Ovary (tissue), 10 donors: ENCODE measurements at regions of chr3 and their contacts with region 1.

Region 1: DNA sequence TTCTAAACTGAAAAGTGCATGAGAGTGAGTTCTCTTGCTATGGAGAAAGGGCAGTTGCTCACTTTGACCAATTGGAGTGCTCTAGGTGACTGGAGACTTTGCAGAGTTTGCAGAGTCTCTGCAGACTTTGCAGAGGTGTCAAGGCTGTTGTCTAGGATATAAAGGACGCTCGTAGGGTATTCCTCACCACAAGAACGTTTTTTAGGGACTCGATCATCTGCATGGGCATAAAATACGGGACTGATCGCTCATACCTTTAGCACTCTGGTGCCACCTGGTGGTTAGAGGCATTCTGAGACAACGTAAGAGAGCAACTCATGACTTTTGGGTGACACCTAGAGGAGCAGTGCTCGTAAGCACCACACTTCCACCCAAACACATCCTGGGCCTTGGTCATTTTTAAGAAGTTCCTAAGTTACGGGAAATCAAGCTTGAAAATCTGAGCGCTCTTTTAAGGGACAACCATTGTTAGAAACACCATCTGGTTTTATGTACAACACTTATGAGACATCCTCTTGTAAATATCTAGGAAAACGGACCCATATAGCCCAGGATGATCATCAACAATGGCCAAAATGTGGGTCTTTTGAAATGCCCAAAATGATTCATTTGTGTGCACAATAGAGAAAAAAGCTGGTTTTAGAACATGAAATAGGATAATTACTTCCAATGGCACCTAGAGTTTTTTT is 51.6 kb upstream of the XCR1 start:
- DNase-seq: peak; percentile 86 to 96 (median 91)
- H3K4me3 ChIP-seq: no peak overlapping the region
- H3K27ac ChIP-seq: no peak overlapping the region
- H3K4me1 ChIP-seq: peaks cover 3% of the 10 kb centered on the region
- H3K27me3 ChIP-seq: no peaks in the 10 kb centered on the region
- CTCF ChIP-seq: peak; percentile 90 to 99 (median 99)
- EP300 ChIP-seq: no peak
- POLR2A ChIP-seq: no peak

Region 2: DNA sequence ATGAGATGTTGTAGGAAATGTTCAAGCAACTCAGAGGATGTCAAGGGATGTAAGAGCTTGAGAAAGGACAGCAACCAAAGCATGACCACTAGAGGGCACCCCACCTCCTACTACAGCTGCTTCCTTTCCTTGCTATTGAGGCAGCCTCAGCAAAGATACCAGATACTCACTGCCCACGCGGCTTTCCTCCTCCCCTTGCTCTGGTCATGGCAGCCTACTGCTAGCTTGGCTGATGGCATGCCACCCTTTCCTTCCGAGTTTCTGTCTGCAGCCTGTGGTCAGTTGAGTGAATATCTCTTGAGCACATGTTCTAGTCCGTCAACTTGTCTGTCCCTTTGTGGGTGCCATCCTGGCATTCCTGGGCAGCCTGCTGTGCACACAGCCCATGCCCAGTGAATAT is 140.0 kb before region 1 on chr3:
- intact Hi-C with region 1: loop called (anchors 2 to 5 kb)
- DNase-seq: peak; percentile 78 to 89 (median 83)
- H3K4me3 ChIP-seq: no peak overlapping the region
- H3K27ac ChIP-seq: no peak overlapping the region
- H3K4me1 ChIP-seq: peaks cover 4% of the 10 kb centered on the region
- H3K27me3 ChIP-seq: no peaks in the 10 kb centered on the region
- CTCF ChIP-seq: peak; percentile 60 to 88 (median 86)
- EP300 ChIP-seq: no peak
- POLR2A ChIP-seq: no peak

Region 3: DNA sequence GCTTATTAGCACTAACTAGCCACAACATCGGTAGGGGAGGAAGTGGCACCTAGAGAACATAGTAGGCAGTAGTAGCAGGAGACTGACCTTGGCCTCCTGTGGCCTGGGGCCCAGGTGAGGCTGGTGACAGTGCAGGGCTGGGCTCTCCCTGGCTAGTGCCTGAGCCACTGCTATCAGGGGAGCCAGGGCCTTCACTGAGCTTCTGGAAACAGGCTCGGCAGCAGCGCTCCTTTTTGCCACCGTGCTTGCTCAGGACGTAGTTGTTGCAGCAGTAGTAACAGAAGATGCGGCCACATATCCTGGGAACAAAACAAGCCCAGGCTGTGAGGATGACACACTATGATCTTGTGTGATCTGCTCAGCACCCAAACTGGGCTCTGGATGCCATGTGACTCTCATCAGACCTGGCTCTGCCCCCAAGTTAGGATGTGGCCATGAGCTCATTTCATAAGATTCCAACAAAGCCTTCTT is 120.5 kb before region 1 on chr3:
- intact Hi-C with region 1: loop called in 1 of 4 experiments (anchors 5 kb)
- DNase-seq: no peak
- H3K4me3 ChIP-seq: no peak overlapping the region
- H3K27ac ChIP-seq: no peak overlapping the region
- H3K4me1 ChIP-seq: no peaks in the 10 kb centered on the region
- H3K27me3 ChIP-seq: no peaks in the 10 kb centered on the region
- CTCF ChIP-seq: no peak
- EP300 ChIP-seq: no peak
- POLR2A ChIP-seq: no peak

Region 4: DNA sequence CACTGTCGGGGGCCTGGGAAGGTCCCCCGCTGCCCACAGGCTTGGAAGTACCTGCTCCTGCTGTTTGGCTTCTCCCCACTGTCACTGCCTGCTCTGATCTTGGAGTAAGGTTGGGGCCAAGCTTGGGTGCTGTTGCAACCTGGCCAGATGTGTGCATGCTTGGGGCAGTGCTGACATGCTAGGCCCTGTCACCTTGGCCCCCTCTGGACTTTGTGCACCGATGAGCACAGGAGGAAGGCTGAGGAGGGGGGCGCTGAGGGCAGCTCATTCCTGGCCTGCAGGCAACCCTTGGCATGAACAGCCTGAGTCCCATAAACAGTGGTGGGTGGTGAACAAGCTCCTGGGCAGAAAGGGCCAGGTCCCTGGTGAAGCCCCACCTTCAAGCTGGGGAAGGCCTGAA is 47.6 kb before region 1 on chr3:
- intact Hi-C with region 1: no loop called
- DNase-seq: no peak
- H3K4me3 ChIP-seq: no peak overlapping the region
- H3K27ac ChIP-seq: no peak overlapping the region
- H3K4me1 ChIP-seq: no peaks in the 10 kb centered on the region
- H3K27me3 ChIP-seq: no peaks in the 10 kb centered on the region
- CTCF ChIP-seq: no peak
- EP300 ChIP-seq: no peak
- POLR2A ChIP-seq: no peak